AG04449 (cell line): ENCODE measurements at regions of chr1 and their contacts with region 1.

Region 1: GRCh38 chr1:159161001-159161718 is 10.3 kb upstream of the CADM3 start:
- DNase-seq: peak; percentile 63
- H3K4me3 ChIP-seq: peak overlapping the region; percentile 28; the same call in 1 of the 2 replicates
- CTCF ChIP-seq: peak; percentile 96

Region 2: GRCh38 chr1:158901623-158902022 is 259.5 kb before region 1 on chr1:
- CTCF ChIA-PET with region 1: no interaction called
- POLR2A ChIA-PET with region 1: no interaction called
- DNase-seq: no peak
- H3K4me3 ChIP-seq: no peak overlapping the region
- CTCF ChIP-seq: no peak

Region 3: GRCh38 chr1:159141584-159142390 is 19.4 kb before region 1 on chr1:
- CTCF ChIA-PET with region 1: interaction called, 22 read pairs
- POLR2A ChIA-PET with region 1: no interaction called
- DNase-seq: no peak
- H3K4me3 ChIP-seq: peak overlapping the region; percentile 29; the same call in 1 of the 2 replicates
- CTCF ChIP-seq: no peak

Region 4: GRCh38 chr1:159197561-159198557 is 36.7 kb after region 1 on chr1:
- CTCF ChIA-PET with region 1: interaction called, 156 read pairs
- POLR2A ChIA-PET with region 1: no interaction called
- DNase-seq: peak; percentile 12
- H3K4me3 ChIP-seq: no peak overlapping the region
- CTCF ChIP-seq: peak; percentile 91

Region 5: DNA sequence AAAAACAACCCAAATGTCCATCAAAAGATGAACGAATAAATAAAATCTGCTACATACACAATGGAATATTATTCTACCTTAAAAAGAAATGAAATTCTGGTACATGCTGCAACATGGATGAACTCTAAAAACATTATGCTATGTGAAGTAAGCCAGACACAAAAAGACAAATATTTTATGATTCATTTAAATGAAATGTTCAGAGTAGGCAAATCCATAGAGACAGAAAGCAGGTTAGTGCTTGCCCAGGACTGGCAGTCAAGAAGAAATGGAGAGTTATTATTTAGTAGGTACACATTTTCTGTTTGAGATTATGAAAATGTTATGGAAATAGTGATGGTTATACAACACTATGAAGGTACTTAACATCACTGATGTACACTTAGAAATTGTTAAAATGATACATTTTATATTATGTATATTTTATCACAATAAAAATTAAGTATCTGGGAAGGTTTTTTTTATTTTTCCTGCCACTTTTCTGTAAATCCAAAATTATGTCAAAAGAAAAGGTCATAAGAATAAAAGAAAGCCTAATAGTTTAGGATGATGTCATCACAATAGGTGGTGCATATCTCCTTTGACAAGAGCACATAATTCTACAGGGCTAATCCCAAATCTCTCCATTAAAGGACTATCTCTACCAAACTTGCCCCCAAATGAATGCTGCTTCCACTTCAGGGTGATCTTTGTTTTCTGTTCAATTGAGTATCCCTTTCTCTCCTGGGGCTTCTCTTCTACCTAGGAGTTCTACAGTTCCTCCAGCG is 100.7 kb after region 1 on chr1:
- CTCF ChIA-PET with region 1: no interaction called
- POLR2A ChIA-PET with region 1: no interaction called
- DNase-seq: no peak
- H3K4me3 ChIP-seq: no peak overlapping the region
- CTCF ChIP-seq: no peak

Region 6: DNA sequence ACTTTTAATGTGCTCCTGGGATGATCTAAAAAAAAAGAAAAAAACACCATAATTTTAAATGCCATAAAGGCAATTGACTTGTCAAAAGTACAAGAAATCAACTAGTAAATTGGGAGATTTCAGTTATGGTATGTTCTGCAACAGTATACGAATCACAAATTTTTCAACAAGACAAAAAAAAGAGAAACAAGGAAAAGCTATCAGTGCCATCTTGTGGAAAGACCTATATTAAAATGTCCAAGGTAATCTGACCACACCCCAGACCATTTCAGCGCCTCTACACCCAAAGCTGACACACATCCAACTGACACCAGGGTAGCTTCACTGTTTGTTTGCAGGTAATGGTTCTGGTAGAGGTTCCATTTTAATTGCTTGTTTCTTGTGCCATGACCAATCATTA is 614.6 kb after region 1 on chr1:
- CTCF ChIA-PET with region 1: interaction called, 10 read pairs
- POLR2A ChIA-PET with region 1: no interaction called
- DNase-seq: no peak
- H3K4me3 ChIP-seq: no peak overlapping the region
- CTCF ChIP-seq: no peak